Heart left ventricle (tissue), 16 donors: ENCODE measurements at regions of chr1 and their contacts with region 1.

Region 1: DNA sequence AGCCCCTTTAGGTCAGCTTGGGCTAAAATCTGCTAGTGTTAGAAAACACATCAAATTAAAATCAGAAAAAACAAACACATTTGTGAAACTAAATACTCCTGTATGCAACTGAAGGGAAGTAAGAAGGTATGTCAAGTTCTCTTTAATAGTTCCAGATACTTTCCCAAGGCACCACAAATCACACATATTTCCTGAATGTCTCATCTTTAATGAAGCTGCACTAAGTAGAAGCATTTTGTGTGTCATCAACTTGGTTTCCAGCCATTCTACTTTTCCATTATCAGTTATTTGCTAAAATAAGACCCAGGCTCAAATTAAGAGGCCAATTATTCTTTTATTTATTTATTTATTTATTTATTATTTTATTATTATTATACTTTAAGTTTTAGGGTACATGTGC is 34.7 kb downstream of the CRB1 start:
- DNase-seq: no peak
- ATAC-seq: no peak
- H3K4me3 ChIP-seq: no peak overlapping the region
- H3K27ac ChIP-seq: no peak overlapping the region
- H3K4me1 ChIP-seq: no peaks in the 10 kb centered on the region
- H3K27me3 ChIP-seq: no peaks in the 10 kb centered on the region
- CTCF ChIP-seq: no peak
- POLR2A ChIP-seq: no peak

Region 2: DNA sequence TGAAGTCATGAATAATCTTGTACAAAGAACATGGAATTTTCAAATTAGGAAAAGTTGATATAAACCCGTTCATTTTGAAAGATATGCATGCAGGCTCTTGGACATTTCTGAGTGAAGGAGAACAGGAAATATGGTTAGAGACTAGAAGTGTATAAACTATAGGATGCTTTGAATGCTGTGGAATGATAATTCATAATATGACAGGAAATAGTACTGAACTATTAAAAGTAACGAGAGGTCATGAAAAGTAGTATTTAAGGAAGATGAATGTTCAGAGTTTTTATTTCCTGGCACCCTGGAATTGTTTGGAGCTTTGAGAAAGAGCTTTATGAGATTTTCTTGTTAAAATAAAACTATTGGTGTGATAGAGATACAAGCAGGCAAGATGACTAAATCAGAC is 53.5 kb before region 1 on chr1:
- intact Hi-C with region 1: loop called in 1 of 10 experiments (anchors 10 kb)
- DNase-seq: no peak
- ATAC-seq: no peak
- H3K4me3 ChIP-seq: no peak overlapping the region
- H3K27ac ChIP-seq: no peak overlapping the region
- H3K4me1 ChIP-seq: no peaks in the 10 kb centered on the region
- H3K27me3 ChIP-seq: no peaks in the 10 kb centered on the region
- CTCF ChIP-seq: no peak
- POLR2A ChIP-seq: no peak